ENCODE measurements at regions of chr4 and their contacts with region 1.

Region 1: DNA sequence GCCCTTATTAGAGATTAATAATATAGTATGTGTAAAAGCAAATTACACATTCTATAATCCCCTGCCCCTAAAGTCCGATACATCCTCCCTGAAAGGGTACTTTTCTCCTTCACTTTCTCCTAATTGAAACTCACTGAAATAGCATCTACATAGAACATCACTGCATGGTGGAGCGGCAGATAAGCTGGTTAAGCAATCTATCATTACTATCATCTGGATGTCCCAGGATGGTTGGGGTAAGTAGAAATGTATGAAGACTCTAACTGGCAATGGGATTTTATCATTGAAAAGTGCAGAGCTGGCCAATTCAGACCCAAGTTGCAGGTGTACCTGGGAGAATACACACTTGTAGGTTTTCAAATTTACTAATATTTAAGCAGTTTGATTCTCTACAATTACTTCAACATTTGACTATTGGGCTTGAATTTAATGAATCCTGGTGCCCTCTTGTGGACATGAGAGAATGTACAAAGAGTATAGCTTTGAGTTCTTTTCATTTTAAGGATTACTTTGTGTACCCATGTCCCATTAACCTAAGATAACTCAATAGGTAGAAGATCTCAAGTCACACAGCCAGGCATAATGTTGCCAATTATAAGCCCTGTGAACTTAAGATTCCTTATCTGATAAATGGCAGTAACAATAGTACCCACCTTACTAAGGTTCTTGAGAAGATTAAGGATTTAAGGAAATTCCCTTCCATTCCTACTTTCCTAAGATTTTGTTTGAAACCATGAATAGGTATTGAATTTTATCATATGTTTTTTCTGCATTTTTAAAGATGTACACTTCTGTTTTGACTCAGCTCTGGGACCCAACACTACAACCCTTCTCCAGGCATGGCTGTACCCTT is 69.8 kb downstream of the SHROOM3 start:
- DNase-seq: no peak
- ATAC-seq: peak; percentile 45
- H3K4me3 Mint-ChIP-seq: no peak overlapping the region
- H3K27ac Mint-ChIP-seq: no peak overlapping the region
- H3K4me1 Mint-ChIP-seq: peaks cover 11% of the 10 kb centered on the region
- H3K27me3 Mint-ChIP-seq: no peaks in the 10 kb centered on the region
- CTCF ChIP-seq: no peak

Region 2: DNA sequence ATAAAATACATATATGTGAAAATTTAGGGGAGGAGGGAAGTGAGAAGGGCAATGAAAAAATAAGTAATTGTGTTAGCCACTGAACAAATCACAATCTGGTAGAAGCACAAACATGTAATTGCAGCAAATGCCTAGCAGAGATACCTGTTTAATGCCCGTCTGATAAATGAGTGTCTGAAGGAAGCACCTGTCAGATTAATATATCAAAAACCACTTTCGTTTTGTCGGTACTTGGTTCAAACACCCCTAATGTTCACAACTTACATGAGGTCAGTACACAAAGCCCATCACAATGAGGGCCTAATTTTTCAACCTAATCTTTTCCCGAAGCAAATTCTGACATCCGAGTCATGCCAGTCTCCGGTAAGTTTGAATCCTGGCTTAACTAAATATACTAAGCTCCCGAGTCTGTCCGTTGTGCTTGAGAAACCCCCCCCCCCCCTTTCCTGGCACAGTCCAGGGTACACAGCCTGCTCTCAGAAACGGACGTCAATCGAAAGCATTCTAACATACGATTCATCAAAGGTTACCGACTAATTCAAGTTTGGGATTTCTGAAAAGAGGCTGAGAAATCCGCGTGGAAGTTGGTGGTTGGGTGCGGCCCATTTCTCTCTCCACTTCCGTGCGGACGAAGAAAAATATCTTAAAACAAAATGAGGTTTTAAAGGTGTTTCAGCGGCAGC is 514.9 kb before region 1 on chr4:
- CTCF ChIA-PET with region 1: no interaction called
- POLR2A ChIA-PET with region 1: no interaction called
- intact Hi-C with region 1: loop called (anchors 5 kb)
- DNase-seq: no peak
- ATAC-seq: no peak
- H3K4me3 Mint-ChIP-seq: peak overlapping the region; percentile 95
- H3K27ac Mint-ChIP-seq: peak overlapping the region; percentile 86
- H3K4me1 Mint-ChIP-seq: peaks cover 34% of the 10 kb centered on the region
- H3K27me3 Mint-ChIP-seq: peaks cover 2% of the 10 kb centered on the region
- CTCF ChIP-seq: no peak

Region 3: DNA sequence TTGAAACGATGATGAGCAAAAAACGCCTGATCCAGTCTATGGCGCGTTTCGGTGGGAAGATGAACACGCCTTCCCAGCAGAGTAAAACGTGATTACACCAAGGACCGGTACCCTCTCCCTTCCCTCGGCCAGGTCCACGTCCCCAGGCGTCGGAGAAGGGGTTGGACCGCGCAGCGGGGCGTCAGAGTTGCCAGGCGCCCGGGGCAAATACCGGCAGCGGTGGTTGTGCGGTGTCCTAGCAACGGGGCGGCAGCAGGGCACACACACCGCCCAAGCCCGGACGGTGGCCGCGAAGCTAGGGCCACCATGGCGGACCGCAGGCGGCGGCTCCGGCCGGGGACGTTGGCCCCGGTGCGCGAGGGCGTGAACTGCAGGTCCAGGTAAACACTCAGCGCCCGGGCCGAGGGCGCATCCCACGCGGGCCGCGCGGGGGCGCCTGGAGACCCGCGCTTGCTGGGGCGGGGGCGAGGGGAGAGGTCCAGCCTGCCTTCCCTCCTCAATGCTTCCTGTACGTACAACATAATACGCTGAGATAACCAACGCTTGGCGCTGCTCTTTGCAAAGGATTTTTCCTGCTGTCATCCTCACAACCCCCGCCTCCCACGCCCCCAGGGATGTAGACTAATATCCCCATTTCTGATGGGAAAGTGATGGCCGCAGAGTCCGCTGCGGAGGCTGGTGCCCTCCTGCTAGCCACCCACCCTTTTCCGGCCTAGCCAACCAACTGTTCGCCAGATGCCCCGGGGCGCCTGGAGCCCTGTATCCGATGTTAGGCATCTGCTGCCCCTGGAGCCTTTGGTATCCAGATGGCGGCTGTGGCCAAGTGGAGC is 253.2 kb before region 1 on chr4 and contains the start of gene FAM47E:
- CTCF ChIA-PET with region 1: no interaction called
- POLR2A ChIA-PET with region 1: no interaction called
- intact Hi-C with region 1: loop called (anchors 5 kb)
- DNase-seq: peak; percentile 24
- ATAC-seq: peak; percentile 70
- H3K4me3 Mint-ChIP-seq: peak within 1 kb of the TSS; percentile 76
- H3K27ac Mint-ChIP-seq: no peak within 1 kb of the TSS
- H3K4me1 Mint-ChIP-seq: peaks cover 6% of the 10 kb centered on the region
- H3K27me3 Mint-ChIP-seq: peaks cover 58% of the 10 kb centered on the region
- CTCF ChIP-seq: no peak
- total RNA-seq, gene FAM47E: 0.39 TPM in 1 of 2 replicates, not detected in the other

Region 4: GRCh38 chr4:76748649-76749048 is 243.8 kb after region 1 on chr4:
- CTCF ChIA-PET with region 1: no interaction called
- POLR2A ChIA-PET with region 1: no interaction called
- intact Hi-C with region 1: loop called (anchors 5 kb)
- DNase-seq: no peak
- ATAC-seq: peak; percentile 21
- H3K4me3 Mint-ChIP-seq: no peak overlapping the region
- H3K27ac Mint-ChIP-seq: no peak overlapping the region
- H3K4me1 Mint-ChIP-seq: no peaks in the 10 kb centered on the region
- H3K27me3 Mint-ChIP-seq: peaks cover 3% of the 10 kb centered on the region
- CTCF ChIP-seq: no peak

Measured in activated B cell treated with CpG ODN at 0.5 μM for 24 hours (primary cell).